Panc1 (cell line): ENCODE measurements at regions of chr7 and their contacts with region 1.

Region 1: DNA sequence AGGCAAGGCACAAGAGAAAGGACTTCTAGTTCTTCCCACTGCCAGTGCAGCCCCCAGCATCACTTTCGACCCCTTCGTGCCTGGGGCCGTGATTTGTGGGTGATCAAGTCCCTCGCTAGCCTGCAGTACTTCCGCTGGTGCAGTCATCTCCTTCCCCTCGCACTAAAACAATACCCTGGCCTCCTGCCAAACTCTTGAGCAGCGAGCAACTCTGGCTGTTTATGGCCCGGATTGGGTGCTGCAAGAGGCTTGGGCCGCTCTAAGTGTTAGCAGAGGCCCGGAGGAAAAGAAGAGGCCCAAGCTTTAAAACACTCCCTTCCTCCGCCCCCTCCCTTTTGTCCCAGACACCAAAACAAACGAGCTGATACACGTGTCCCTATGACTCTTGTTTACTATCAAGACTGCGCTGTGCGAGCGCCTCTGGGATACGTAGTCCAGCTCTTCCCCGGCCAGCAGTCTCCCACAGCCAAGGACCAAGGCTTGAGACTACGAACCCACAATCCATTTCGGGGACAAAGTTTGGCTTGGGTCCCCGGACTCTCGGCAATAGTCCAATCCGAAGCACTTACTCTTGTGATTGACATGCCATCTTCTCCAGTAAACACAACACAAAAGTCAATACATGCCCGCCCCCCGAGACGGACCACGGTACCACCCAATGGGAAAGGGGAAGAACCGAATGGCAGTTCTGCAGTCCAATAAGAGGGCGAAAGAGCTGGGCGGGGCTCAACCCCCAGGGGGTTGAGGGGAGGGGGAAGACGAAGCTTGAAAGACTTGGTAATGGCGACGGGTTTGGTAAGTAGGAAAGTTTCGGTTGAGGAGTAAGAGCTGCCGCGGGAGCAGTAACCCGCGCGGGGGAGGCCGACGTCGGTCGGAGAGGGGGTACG is at the start of gene HBP1:
- DNase-seq: peak; percentile 100
- ATAC-seq: peak; percentile 95
- H3K4me3 ChIP-seq: peak within 1 kb of the TSS; percentile 79 to 91
- H3K27ac ChIP-seq: peak within 1 kb of the TSS; percentile 87
- H3K4me1 ChIP-seq: peaks cover 6% of the 10 kb centered on the region; the same call in 1 of the 2 replicates
- H3K27me3 ChIP-seq: peaks cover 14% of the 10 kb centered on the region
- CTCF ChIP-seq: no peak
- total RNA-seq, gene HBP1: 28.1 TPM

Region 2: GRCh38 chr7:106086062-106086461 is 1082.4 kb before region 1 on chr7:
- CTCF ChIA-PET with region 1: no interaction called
- POLR2A ChIA-PET with region 1: interaction called, 10 read pairs
- in situ Hi-C with region 1: no loop called
- intact Hi-C with region 1: no loop called
- DNase-seq: no peak
- ATAC-seq: no peak
- H3K4me3 ChIP-seq: no peak overlapping the region
- H3K27ac ChIP-seq: no peak overlapping the region
- H3K4me1 ChIP-seq: no peaks in the 10 kb centered on the region; the same call in 1 of the 2 replicates
- H3K27me3 ChIP-seq: no peaks in the 10 kb centered on the region
- CTCF ChIP-seq: no peak

Region 3: GRCh38 chr7:107130487-107131225 is 37.8 kb before region 1 on chr7:
- CTCF ChIA-PET with region 1: no interaction called
- POLR2A ChIA-PET with region 1: interaction called, 11 read pairs
- in situ Hi-C with region 1: no loop called
- intact Hi-C with region 1: no loop called
- DNase-seq: no peak
- ATAC-seq: no peak
- H3K4me3 ChIP-seq: no peak overlapping the region
- H3K27ac ChIP-seq: no peak overlapping the region
- H3K4me1 ChIP-seq: no peaks in the 10 kb centered on the region
- H3K27me3 ChIP-seq: peaks cover 6% of the 10 kb centered on the region; the same call in 1 of the 2 replicates
- CTCF ChIP-seq: no peak

Region 4: GRCh38 chr7:107150375-107151073 is 18.0 kb before region 1 on chr7:
- CTCF ChIA-PET with region 1: interaction called, 9 read pairs
- POLR2A ChIA-PET with region 1: interaction called, 10 read pairs
- in situ Hi-C with region 1: no loop called
- intact Hi-C with region 1: no loop called
- DNase-seq: no peak
- ATAC-seq: no peak
- H3K4me3 ChIP-seq: no peak overlapping the region
- H3K27ac ChIP-seq: no peak overlapping the region
- H3K4me1 ChIP-seq: no peaks in the 10 kb centered on the region
- H3K27me3 ChIP-seq: no peaks in the 10 kb centered on the region; the same call in 1 of the 2 replicates
- CTCF ChIP-seq: peak; percentile 70; the same call in 1 of the 2 replicates

Region 5: DNA sequence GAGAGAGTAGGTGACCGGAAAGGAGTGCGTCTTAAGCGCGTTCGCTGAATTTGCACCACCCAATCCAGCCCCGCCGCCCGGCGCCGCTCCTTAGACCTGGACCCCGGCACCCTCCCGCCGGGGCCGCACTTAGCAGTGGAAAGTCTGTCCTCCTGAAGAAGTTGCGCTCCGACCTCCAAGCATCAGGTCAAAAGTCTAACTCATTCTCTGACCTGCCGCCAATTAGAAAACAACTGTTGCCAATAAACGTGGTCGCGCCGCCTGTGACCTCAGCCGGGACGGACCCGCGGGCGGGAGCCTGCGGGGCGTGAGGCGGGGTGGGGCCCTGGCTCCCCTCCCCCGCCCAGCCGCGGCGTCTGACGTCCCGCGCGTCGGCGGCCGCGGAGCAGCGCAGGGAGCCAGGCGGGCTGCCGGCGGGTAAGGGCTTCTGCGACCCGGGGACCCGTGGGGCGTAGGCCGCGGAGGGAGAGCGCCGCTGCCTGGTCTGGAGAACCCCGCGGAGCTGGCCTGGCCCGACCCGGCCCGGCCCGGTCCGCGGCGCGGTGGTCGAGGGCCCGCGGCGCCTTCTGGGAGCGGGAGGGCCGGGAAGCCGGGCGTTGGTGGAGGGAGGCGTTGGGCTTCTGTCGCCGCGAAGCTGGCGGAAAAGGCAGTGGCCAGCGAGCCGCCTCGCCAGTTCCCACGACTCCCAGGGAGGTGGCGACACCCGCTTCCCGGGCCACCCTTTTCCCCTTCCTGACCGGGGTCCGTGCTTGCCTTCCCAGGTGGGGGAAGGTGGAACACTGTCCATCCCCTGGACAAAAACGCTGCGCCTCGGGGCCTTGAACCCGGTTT is 411.6 kb after region 1 on chr7 and contains the start of gene BCAP29:
- CTCF ChIA-PET with region 1: no interaction called
- POLR2A ChIA-PET with region 1: interaction called, 10 read pairs
- in situ Hi-C with region 1: no loop called
- intact Hi-C with region 1: no loop called
- DNase-seq: no peak
- ATAC-seq: peak; percentile 99
- H3K4me3 ChIP-seq: peak within 1 kb of the TSS; percentile 94 to 95
- H3K27ac ChIP-seq: peak within 1 kb of the TSS; percentile 96
- H3K4me1 ChIP-seq: peaks cover 12% of the 10 kb centered on the region
- H3K27me3 ChIP-seq: no peaks in the 10 kb centered on the region
- CTCF ChIP-seq: peak; percentile 34
- total RNA-seq, gene BCAP29: 71.7 TPM